Activated CD4-positive, alpha-beta memory T cell treated with anti-CD3 and anti-CD28 coated beads, Interleukin-2, amount 10 ng/mL, durations not matched to agents 7 days and 5 days (primary cell): ENCODE measurements at regions of chr12 and their contacts with region 1.

Region 1: DNA sequence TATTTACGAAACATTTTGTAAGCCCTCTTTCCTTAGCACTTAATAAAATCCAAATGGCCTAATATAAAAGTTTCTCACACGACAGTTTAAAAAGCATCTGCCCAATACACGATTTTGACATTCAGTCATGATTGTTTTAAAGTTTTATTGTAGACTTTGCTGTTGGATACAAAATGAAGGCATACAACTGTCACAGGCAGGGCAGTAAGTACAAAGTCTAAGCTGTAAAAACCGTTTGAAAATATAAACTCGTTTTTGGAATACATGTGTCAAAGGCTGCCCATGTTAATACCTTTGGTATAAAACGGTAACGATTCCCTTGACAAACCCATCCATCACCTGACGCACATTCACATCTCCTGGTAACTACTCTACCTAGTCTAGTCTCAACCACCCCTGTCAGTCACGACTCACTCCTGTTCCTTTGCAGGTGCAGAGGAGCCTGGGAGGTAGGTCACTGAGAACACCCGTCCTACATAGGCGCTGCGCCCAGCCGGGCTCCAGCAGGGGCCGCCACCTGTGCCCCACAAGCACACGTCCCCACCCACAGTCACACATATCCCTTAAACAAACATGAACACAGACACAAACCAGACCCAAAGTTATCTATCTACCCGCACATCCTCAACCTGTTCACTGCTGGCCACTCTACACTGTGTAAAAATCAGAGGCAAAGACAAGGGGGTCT is 27.1 kb downstream of the KCTD10 start:
- DNase-seq: no peak
- H3K4me3 Mint-ChIP-seq: no peak overlapping the region
- H3K27ac Mint-ChIP-seq: no peak overlapping the region
- H3K4me1 Mint-ChIP-seq: peaks cover 19% of the 10 kb centered on the region
- H3K27me3 Mint-ChIP-seq: no peaks in the 10 kb centered on the region

Region 2: DNA sequence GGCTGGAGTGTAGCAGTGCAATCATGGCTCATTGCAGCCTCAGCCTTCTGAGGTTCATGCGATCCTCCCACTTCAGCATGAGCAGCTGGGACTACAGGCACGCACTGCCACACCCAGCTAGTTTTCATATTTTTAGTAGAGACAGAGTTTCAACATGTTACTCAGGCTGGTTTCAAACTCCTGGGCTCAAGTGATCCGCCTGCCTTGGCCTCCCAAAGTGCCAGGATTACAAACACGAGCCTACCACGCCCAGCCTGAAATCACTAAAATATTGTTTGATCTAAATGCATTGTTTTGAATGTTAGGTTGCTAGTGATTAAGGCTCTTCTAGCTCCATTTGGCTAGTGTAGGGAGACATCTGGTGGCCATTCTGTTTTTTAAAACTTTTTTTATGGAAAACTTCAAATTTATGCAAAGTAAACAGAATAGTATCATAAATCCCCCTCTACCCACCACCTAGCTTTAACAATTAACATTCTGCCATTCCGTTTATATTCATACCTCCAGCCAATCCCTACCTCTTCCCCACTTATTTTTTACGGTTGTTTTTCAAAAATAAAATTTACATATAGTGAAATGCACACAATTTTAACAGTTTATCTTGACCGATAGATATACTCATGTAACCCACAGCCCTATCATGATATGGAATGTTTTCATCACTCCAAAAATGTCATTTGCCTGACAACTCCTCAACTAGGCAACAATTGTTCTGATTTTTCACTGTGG is 64.5 kb before region 1 on chr12:
- CTCF ChIA-PET with region 1: no interaction called
- POLR2A ChIA-PET with region 1: no interaction called
- DNase-seq: no peak
- H3K4me3 Mint-ChIP-seq: no peak overlapping the region
- H3K27ac Mint-ChIP-seq: no peak overlapping the region
- H3K4me1 Mint-ChIP-seq: no peaks in the 10 kb centered on the region
- H3K27me3 Mint-ChIP-seq: peaks cover 45% of the 10 kb centered on the region

Region 3: GRCh38 chr12:109428037-109428629 is 21.9 kb before region 1 on chr12:
- CTCF ChIA-PET with region 1: interaction called, 13 read pairs
- POLR2A ChIA-PET with region 1: interaction called, 3 read pairs
- DNase-seq: peak; percentile 77
- H3K4me3 Mint-ChIP-seq: no peak overlapping the region
- H3K27ac Mint-ChIP-seq: no peak overlapping the region
- H3K4me1 Mint-ChIP-seq: peaks cover 6% of the 10 kb centered on the region
- H3K27me3 Mint-ChIP-seq: peaks cover 2% of the 10 kb centered on the region